ENCODE measurements at regions of chr19 and their contacts with region 1.

Region 1: GRCh38 chr19:54364775-54365257 is at the start of gene LAIR1:
- DNase-seq: peak; percentile 30 to 58 (median 49)
- ATAC-seq: peak; percentile 72
- H3K4me3 ChIP-seq: peak within 1 kb of the TSS; percentile 67
- H3K4me3 Mint-ChIP-seq: peak within 1 kb of the TSS; percentile 87 to 96 (median 94)
- H3K27ac ChIP-seq: peak within 1 kb of the TSS; percentile 79
- H3K27ac Mint-ChIP-seq: peak within 1 kb of the TSS; percentile 85 to 97 (median 93)
- H3K4me1 ChIP-seq: peaks cover 54 to 59% of the 10 kb centered on the region in 2 donors
- H3K4me1 Mint-ChIP-seq: peaks cover 40 to 88% (median 72%) of the 10 kb centered on the region in 7 donors
- H3K27me3 ChIP-seq: no peaks in the 10 kb centered on the region
- H3K27me3 Mint-ChIP-seq: peaks cover 0 to 25% (median 0%) of the 10 kb centered on the region in 5 donors
- total RNA-seq, gene LAIR1: 47.0 to 92.3 (median 82.3) TPM

Region 2: DNA sequence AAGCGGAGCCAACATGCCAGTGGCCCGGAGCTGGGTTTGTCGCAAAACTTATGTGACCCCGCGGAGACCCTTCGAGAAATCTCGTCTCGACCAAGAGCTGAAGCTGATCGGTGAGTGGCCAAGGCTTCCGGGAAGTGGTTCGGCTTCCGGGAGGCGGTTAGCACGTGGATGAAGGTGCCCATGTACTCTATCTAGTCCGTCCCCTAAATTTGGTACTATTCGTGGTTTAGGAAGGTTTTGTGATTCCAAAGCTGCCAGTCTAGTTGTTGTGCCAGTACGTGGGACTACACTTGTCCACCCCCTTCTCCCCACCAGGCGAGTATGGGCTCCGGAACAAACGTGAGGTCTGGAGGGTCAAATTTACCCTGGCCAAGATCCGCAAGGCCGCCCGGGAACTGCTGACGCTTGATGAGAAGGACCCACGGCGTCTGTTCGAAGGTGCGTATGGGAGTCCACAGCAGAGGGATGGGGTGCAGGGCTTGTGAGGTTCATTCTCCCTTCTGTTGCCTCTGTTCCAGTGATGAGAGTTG is 163.6 kb before region 1 on chr19:
- CTCF ChIA-PET with region 1: no interaction called
- POLR2A ChIA-PET with region 1: no interaction called
- intact Hi-C with region 1: no loop called
- DNase-seq: no peak
- ATAC-seq: no peak
- H3K4me3 ChIP-seq: peak overlapping the region; percentile 79
- H3K4me3 Mint-ChIP-seq: peak overlapping the region; percentile 86 to 100 (median 99)
- H3K27ac ChIP-seq: peak overlapping the region; percentile 85
- H3K27ac Mint-ChIP-seq: peak overlapping the region; percentile 95 to 100 (median 99)
- H3K4me1 ChIP-seq: peaks cover 35 to 37% of the 10 kb centered on the region in 2 donors
- H3K4me1 Mint-ChIP-seq: peaks cover 21 to 66% (median 58%) of the 10 kb centered on the region in 7 donors
- H3K27me3 ChIP-seq: no peaks in the 10 kb centered on the region
- H3K27me3 Mint-ChIP-seq: peaks cover 0 to 4% (median 0%) of the 10 kb centered on the region in 5 donors

Region 3: GRCh38 chr19:54379187-54379678 is 14.4 kb after region 1 on chr19:
- CTCF ChIA-PET with region 1: no interaction called
- POLR2A ChIA-PET with region 1: interaction called, 6 read pairs
- intact Hi-C with region 1: loop called (anchors 1 kb)
- DNase-seq: no peak
- ATAC-seq: no peak
- H3K4me3 ChIP-seq: no peak overlapping the region
- H3K4me3 Mint-ChIP-seq: peak overlapping the region in 5 of 10 donors; percentile 5 to 71 (median 36)
- H3K27ac ChIP-seq: no peak overlapping the region
- H3K27ac Mint-ChIP-seq: peak overlapping the region in 5 of 9 donors; percentile 12 to 68 (median 25)
- H3K4me1 ChIP-seq: peaks cover 20 to 48% of the 10 kb centered on the region in 2 donors
- H3K4me1 Mint-ChIP-seq: peaks cover 42 to 74% (median 63%) of the 10 kb centered on the region in 7 donors
- H3K27me3 ChIP-seq: no peaks in the 10 kb centered on the region
- H3K27me3 Mint-ChIP-seq: peaks cover 0 to 40% (median 0%) of the 10 kb centered on the region in 5 donors

Region 4: DNA sequence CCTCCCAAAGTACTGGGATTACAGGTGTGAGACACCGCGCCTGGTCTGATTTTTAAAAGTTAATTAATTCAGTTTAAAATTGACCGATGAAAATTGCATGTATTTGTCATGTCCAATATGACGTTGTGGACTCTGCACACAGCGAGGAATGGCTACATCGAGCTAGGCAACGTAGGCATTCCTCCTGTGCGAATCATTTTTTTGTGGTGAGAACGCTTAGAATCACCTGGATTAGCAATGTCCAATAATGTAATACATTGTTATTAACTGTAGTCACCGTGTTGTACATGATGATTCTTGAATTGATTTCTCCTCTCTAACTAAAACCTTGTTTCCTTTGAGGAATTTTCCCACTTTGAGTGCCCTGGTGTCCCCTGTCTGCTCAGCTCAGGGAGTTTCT is 141.3 kb after region 1 on chr19:
- CTCF ChIA-PET with region 1: no interaction called
- POLR2A ChIA-PET with region 1: no interaction called
- intact Hi-C with region 1: loop called (anchors 5 kb)
- DNase-seq: no peak
- ATAC-seq: no peak
- H3K4me3 ChIP-seq: no peak overlapping the region
- H3K4me3 Mint-ChIP-seq: peak overlapping the region in 1 of 10 donors; percentile 6
- H3K27ac ChIP-seq: no peak overlapping the region
- H3K27ac Mint-ChIP-seq: peak overlapping the region in 1 of 9 donors; percentile 74
- H3K4me1 ChIP-seq: peaks cover 0 to 15% of the 10 kb centered on the region in 2 donors
- H3K4me1 Mint-ChIP-seq: peaks cover 0 to 33% (median 8%) of the 10 kb centered on the region in 7 donors
- H3K27me3 ChIP-seq: no peaks in the 10 kb centered on the region
- H3K27me3 Mint-ChIP-seq: peaks cover 7 to 22% (median 9%) of the 10 kb centered on the region in 5 donors

Measured in naive thymus-derived CD4-positive, alpha-beta T cell (primary cell).